Ovary (tissue), 10 donors: ENCODE measurements at regions of chr12 and their contacts with region 1.

Region 1: DNA sequence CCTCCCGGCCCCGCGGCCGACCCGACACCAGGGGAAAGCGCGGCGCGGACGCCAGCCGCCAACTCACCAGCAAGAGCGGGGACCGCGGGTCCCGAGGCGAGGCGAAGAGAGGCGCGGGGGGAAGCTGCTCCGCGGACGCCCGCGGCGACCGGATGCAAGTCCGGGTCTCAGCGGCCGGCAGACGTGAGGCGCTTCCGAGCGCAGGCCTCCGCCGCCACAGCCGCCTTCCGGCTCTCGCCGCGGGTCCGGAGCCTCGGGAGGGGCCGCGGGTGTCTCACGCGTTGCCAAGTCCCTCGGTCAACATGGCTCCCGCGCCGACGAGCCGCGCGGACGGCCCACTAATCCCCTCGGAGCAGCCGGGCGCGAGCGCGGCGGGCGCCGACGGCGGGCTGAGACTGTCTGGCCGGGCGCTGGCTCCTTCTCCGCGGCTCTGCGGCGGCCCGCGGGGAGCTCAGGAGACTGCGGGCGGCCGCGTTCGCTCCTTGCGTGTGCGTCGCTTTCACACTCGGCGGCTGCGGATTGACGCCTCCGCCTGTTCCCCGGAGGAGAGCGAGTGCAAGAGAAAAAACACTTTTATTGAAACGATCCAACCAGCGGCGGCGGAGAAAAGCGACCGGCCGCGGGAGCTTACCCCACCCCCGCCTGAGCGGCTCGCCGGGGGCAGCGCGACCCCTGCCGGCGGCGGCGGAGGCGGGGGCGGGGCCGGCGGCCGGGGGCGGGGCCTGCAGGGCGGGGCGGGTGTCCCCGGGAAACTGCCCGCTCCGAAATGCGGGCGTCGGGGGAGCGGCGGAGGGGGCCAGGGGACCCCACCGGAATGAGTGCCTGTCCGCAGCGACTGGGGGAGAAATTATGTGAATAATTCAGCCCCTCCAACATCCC is at the start of gene CDK17:
- DNase-seq: peak; percentile 80 to 89 (median 88)
- H3K4me3 ChIP-seq: peak within 1 kb of the TSS; percentile 94
- H3K27ac ChIP-seq: peak within 1 kb of the TSS; percentile 96
- H3K4me1 ChIP-seq: no peaks in the 10 kb centered on the region
- H3K27me3 ChIP-seq: no peaks in the 10 kb centered on the region
- CTCF ChIP-seq: peak in 2 of 3 donors; percentile 59 to 62
- EP300 ChIP-seq: no peak
- POLR2A ChIP-seq: peak; percentile 82
- total RNA-seq, gene CDK17: 28.0 to 59.2 (median 31.4) TPM

Region 2: DNA sequence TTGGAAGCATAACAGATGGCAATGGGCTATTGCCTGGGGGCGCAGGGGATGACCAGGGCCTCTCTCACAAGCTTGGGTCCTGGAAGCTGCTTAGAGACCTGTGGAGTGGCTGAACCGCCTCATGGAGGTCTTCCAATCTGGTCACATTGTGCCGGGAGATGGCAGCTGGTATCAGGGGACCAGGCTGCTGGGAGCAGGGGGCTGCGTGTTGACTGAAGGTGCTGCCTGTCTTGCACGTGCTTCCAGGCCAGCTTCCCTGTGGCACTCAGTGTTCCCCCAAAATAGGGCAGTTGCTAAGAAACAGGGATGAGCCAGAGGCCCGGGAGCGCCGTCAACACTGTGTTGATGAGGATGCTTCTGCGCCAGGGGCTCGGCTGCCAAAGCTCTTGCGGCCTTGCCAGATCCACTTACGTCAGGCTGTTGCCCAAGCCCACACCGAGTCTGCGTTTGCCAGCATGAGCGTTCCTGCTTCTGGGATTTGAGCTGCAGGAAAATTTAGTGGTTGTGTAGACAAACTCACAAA is 166.2 kb before region 1 on chr12:
- intact Hi-C with region 1: loop called in 2 of 4 experiments (anchors 5 to 10 kb)
- DNase-seq: peak; percentile 85 to 95 (median 93)
- H3K4me3 ChIP-seq: no peak overlapping the region
- H3K27ac ChIP-seq: peak overlapping the region in 1 of 2 donors; percentile 61
- H3K4me1 ChIP-seq: peaks cover 21% of the 10 kb centered on the region
- H3K27me3 ChIP-seq: no peaks in the 10 kb centered on the region
- CTCF ChIP-seq: no peak
- EP300 ChIP-seq: peak; percentile 76
- POLR2A ChIP-seq: no peak

Region 3: GRCh38 chr12:96743606-96744005 is 343.4 kb after region 1 on chr12:
- intact Hi-C with region 1: no loop called
- DNase-seq: no peak
- H3K4me3 ChIP-seq: no peak overlapping the region
- H3K27ac ChIP-seq: no peak overlapping the region
- H3K4me1 ChIP-seq: no peaks in the 10 kb centered on the region
- H3K27me3 ChIP-seq: no peaks in the 10 kb centered on the region
- CTCF ChIP-seq: no peak
- EP300 ChIP-seq: no peak
- POLR2A ChIP-seq: no peak